ENCODE measurements at regions of chr2 and their contacts with region 1.

Region 1: DNA sequence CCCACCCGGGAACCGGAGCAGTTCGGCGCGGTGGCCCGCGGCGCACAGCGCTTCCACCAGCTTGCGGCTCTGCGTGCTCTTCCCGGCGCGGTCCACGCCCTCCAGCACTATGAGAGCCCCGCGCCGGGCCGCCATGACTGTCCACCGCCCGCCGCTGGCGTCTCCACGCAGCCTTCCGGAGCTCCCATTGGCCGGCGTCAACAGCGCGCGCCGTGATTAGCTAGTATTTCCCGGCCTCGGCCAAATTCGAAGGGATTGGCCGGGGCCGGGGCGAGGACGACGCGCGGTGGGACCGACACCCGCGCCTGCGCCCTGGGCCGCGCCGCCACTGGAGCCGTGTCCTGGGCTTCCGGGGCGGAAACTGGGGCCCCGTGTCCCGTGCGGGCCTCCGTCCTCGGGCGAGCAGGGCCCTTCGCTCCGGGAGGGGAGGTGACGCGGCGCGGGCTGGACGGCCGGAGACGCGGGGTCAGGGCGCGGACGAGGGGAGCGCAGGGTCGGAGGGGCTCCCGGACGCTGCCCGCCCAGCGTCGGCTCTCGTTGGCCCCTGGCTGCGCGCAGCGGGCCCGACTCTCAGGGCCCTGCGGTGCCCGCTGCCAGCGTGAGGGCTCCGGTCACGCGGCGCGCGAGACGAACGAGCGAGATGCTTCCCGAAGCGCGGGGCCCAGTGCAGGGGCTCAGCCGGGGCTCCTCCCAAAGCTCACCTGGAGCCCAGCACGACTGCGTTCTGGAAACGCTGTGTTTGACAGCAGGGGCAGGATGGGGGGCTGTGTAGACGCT is at the start of gene DTYMK:
- DNase-seq: peak; percentile 93 to 98 (median 96)
- H3K4me3 ChIP-seq: peak within 1 kb of the TSS; percentile 54 to 98 (median 93)
- H3K27ac ChIP-seq: peak within 1 kb of the TSS; percentile 62 to 98 (median 93)
- H3K27me3 ChIP-seq: no peaks in the 10 kb centered on the region
- CTCF ChIP-seq: peak in 36 of 56 donors; percentile 3 to 58 (median 29)
- total RNA-seq, gene DTYMK: 9.9 to 26.6 (median 15.6) TPM

Region 2: DNA sequence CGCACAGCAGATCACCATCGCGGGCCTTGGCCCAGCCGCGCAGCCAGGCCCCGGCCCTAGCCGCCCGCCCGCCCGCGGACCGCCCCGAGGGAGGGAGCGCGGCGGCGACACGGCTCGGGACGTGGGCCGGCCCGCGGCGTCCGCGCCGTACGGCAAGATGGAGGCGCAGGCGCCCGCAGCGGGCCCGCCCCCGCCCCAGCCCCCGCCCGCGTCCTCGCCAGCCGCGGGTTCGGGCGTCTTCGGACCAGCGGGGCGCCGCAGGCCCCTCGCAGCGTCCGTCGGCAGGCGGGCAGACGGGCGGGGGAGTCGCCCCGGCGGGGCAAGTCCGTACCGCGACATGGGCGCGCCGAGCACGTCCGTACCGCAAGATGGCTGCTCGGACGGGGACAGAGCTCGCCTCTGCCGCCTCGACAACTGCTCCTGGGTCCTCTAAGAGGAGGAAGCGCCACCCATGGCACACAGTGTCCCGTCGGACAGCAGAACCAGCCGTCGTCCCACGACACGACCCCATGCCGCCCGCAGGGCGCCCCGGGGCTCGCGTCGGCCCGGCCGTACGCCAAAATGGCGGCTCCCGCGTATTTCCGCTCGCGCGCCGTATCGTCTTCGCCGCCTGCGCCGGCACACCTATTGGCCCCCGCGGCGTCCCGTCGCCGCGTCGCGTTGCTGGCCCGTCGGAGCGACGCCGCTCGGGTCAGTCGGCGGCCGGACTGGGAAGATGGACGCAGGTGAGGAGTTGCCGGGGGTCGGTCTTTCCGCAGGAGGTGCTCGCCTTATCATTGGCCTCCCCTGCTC is 49.6 kb before region 1 on chr2 and contains the starts of genes ATG4B and THAP4:
- intact Hi-C with region 1: loop called (anchors 1 to 2 kb)
- DNase-seq: peak; percentile 69 to 92 (median 81)
- H3K4me3 ChIP-seq: peak within 1 kb of the TSS; percentile 57 to 99 (median 86)
- H3K27ac ChIP-seq: peak within 1 kb of the TSS; percentile 91 to 100 (median 98)
- H3K27me3 ChIP-seq: no peaks in the 10 kb centered on the region
- CTCF ChIP-seq: peak in 24 of 56 donors; percentile 7 to 48 (median 22)
- total RNA-seq, gene ATG4B: 79.3 to 164 (median 118) TPM
- total RNA-seq, gene THAP4: 35.1 to 69.3 (median 54.0) TPM

Region 3: GRCh38 chr2:241702132-241703031 is 15.5 kb after region 1 on chr2:
- intact Hi-C with region 1: loop called in 1 of 2 experiments (anchors 2 kb)
- DNase-seq: peak; percentile 77 to 93 (median 84)
- H3K4me3 ChIP-seq: peak overlapping the region; percentile 63 to 100 (median 88)
- H3K27ac ChIP-seq: peak overlapping the region in 56 of 59 donors; percentile 32 to 97 (median 91)
- H3K27me3 ChIP-seq: no peaks in the 10 kb centered on the region
- CTCF ChIP-seq: peak in 24 of 56 donors; percentile 3 to 46 (median 23)